ENCODE measurements at regions of chr11 and their contacts with region 1.

Region 1: DNA sequence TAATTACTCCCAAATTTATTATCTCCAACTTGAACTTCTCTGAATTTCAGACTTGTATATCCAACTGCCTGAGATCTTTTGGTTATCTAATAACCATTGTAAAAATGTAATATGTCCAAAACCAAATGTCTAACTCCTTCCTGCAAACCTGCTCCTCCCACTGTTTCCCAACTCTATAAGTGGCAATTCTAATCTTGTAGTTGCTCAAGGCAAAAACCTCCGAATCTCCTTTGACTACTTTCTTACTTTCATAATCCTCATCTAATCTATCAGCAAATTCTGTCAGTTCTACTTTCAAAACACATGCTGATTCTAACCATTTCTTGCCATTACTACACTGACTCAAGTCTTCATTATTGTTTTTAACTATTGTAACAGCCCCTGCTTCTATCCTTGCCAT is 55.7 kb downstream of the FAM168A start:
- DNase-seq: no peak
- ATAC-seq: no peak
- H3K4me3 ChIP-seq: no peak overlapping the region
- H3K4me3 Mint-ChIP-seq: no peak overlapping the region
- H3K27ac ChIP-seq: no peak overlapping the region
- H3K27ac Mint-ChIP-seq: no peak overlapping the region
- H3K4me1 ChIP-seq: peaks cover 15% of the 10 kb centered on the region
- H3K4me1 Mint-ChIP-seq: peaks cover 48% of the 10 kb centered on the region
- H3K27me3 ChIP-seq: no peaks in the 10 kb centered on the region
- H3K27me3 Mint-ChIP-seq: no peaks in the 10 kb centered on the region
- CTCF ChIP-seq: no peak

Region 2: DNA sequence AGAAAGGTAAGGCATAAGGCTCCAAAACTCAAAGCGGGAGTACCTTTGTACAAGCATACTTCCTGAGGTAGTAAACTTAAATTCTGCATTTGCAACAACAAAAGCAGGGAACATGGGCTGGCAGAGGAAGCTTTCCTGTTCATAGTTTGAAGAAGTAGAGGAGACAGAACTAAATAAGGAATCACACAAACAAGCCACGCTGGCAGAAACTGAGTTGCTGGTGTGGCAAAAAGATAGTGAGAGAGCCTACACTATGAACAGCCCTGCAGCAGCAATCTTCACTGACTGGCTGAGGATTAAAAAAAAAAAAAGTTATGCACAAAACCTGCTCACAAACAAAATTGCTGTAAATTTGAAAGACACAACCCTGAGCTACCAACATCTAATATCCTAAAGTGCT is 446.6 kb before region 1 on chr11:
- CTCF ChIA-PET with region 1: no interaction called
- POLR2A ChIA-PET with region 1: no interaction called
- intact Hi-C with region 1: no loop called
- DNase-seq: no peak
- ATAC-seq: no peak
- H3K4me3 ChIP-seq: no peak overlapping the region
- H3K4me3 Mint-ChIP-seq: no peak overlapping the region
- H3K27ac ChIP-seq: no peak overlapping the region
- H3K27ac Mint-ChIP-seq: peak overlapping the region; percentile 12
- H3K4me1 ChIP-seq: no peaks in the 10 kb centered on the region
- H3K4me1 Mint-ChIP-seq: peaks cover 43% of the 10 kb centered on the region
- H3K27me3 ChIP-seq: no peaks in the 10 kb centered on the region
- H3K27me3 Mint-ChIP-seq: no peaks in the 10 kb centered on the region
- CTCF ChIP-seq: no peak

Region 3: DNA sequence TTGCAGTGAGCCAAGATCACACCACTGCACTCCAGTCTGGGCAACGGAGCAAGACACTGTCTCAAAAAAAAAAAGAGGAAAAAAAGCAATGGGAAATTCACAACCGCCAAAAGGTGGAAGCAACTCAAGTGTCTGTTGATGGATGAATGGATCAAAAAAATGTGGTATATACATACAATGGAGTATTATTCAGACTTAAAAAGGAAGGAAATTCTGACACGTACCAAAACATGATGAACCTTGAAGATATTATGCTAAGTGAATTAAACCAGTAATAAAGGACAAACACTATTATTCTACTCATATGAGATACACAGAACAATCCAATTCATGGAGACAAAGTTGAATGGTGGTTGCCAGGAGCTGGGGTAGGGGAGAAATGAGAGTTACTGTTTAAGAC is 14.8 kb after region 1 on chr11:
- CTCF ChIA-PET with region 1: no interaction called
- POLR2A ChIA-PET with region 1: interaction called, 4 read pairs
- intact Hi-C with region 1: loop called in 1 of 2 experiments (anchors 1 kb)
- DNase-seq: no peak
- ATAC-seq: no peak
- H3K4me3 ChIP-seq: no peak overlapping the region
- H3K4me3 Mint-ChIP-seq: no peak overlapping the region
- H3K27ac ChIP-seq: no peak overlapping the region
- H3K27ac Mint-ChIP-seq: no peak overlapping the region
- H3K4me1 ChIP-seq: no peaks in the 10 kb centered on the region
- H3K4me1 Mint-ChIP-seq: peaks cover 16% of the 10 kb centered on the region
- H3K27me3 ChIP-seq: no peaks in the 10 kb centered on the region
- H3K27me3 Mint-ChIP-seq: no peaks in the 10 kb centered on the region
- CTCF ChIP-seq: no peak

Measured in CD4-positive, alpha-beta T cell (primary cell).